ENCODE measurements at regions of chr11 and their contacts with region 1.

Region 1: GRCh38 chr11:134050541-134051383 is 18.1 kb upstream of the JAM3 start:
- DNase-seq: peak; percentile 30
- ATAC-seq: peak; percentile 90
- H3K4me3 ChIP-seq: peak overlapping the region; percentile 38 to 57
- H3K27ac ChIP-seq: no peak overlapping the region; the same call in 1 of the 2 replicates
- H3K4me1 ChIP-seq: peaks cover 9% of the 10 kb centered on the region
- H3K27me3 ChIP-seq: no peaks in the 10 kb centered on the region
- CTCF ChIP-seq: peak; percentile 98

Region 2: GRCh38 chr11:133927690-133928627 is 122.8 kb before region 1 on chr11:
- CTCF ChIA-PET with region 1: interaction called, 21 read pairs
- POLR2A ChIA-PET with region 1: no interaction called
- in situ Hi-C with region 1: no loop called
- intact Hi-C with region 1: loop called (anchors 1 kb)
- DNase-seq: peak; percentile 53
- ATAC-seq: peak; percentile 91
- H3K4me3 ChIP-seq: peak overlapping the region; percentile 20 to 37
- H3K27ac ChIP-seq: no peak overlapping the region
- H3K4me1 ChIP-seq: peaks cover 4% of the 10 kb centered on the region
- H3K27me3 ChIP-seq: no peaks in the 10 kb centered on the region
- CTCF ChIP-seq: peak; percentile 98

Region 3: GRCh38 chr11:134037046-134037908 is 13.5 kb before region 1 on chr11:
- CTCF ChIA-PET with region 1: interaction called, 10 read pairs
- POLR2A ChIA-PET with region 1: no interaction called
- in situ Hi-C with region 1: no loop called
- intact Hi-C with region 1: no loop called
- DNase-seq: no peak
- ATAC-seq: peak; percentile 87
- H3K4me3 ChIP-seq: peak overlapping the region; percentile 65 to 68
- H3K27ac ChIP-seq: peak overlapping the region; percentile 68
- H3K4me1 ChIP-seq: peaks cover 18% of the 10 kb centered on the region
- H3K27me3 ChIP-seq: 0 out of 2 replicates have a peak, but pooled peaks cover 2% of the 10 kb centered on the region
- CTCF ChIP-seq: no peak

Region 4: GRCh38 chr11:134098566-134099184 is 47.9 kb after region 1 on chr11:
- CTCF ChIA-PET with region 1: interaction called, 15 read pairs
- POLR2A ChIA-PET with region 1: no interaction called
- in situ Hi-C with region 1: no loop called
- intact Hi-C with region 1: loop called (anchors 5 kb)
- DNase-seq: peak; percentile 5
- ATAC-seq: peak; percentile 96
- H3K4me3 ChIP-seq: no peak overlapping the region
- H3K27ac ChIP-seq: no peak overlapping the region
- H3K4me1 ChIP-seq: no peaks in the 10 kb centered on the region
- H3K27me3 ChIP-seq: no peaks in the 10 kb centered on the region
- CTCF ChIP-seq: peak; percentile 78

Region 5: DNA sequence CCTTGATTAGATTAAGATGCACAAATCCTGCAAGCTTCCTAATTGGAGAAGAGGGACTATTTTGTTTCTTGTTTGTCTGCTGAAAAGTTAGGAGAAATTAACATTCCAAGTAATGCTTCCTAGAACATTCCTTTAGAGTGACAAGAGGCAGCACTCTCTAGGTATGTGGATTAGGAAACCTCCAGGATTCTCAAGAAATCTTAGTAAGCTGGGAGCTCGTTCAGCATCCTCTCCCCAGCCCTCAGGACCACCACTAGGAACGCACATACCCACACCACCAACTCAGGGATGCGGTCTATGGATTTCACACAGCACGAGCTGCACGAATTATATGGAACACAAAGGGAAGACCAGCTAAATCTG is 120.1 kb after region 1 on chr11:
- CTCF ChIA-PET with region 1: no interaction called
- POLR2A ChIA-PET with region 1: no interaction called
- in situ Hi-C with region 1: no loop called
- intact Hi-C with region 1: no loop called
- DNase-seq: no peak
- ATAC-seq: no peak
- H3K4me3 ChIP-seq: no peak overlapping the region
- H3K27ac ChIP-seq: no peak overlapping the region
- H3K4me1 ChIP-seq: no peaks in the 10 kb centered on the region
- H3K27me3 ChIP-seq: no peaks in the 10 kb centered on the region
- CTCF ChIP-seq: no peak